ENCODE measurements at regions of chr14 and their contacts with region 1.

Region 1: GRCh38 chr14:105203057-105203531 is 22.0 kb upstream of the NUDT14 start:
- DNase-seq: peak; percentile 90
- ATAC-seq: peak; percentile 45

Region 2: DNA sequence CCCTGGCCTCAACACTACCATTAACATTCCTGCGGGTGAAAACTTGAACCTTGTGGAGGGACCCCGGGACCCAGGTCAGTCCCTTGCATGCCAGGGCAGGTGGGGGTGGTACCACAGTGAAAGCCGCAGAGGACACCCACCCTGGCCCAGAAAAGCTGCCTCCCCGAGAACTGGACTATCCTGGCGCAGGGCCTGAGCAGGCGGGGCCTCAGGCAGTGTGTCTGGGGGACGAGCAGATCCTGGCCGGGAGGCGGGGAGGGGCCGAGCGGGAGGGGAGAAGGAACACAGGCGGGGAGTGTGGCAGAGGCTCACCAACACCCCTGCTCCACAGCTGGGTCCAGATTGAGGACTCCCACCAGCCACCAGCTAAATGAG is 235.0 kb before region 1 on chr14:
- intact Hi-C with region 1: no loop called
- DNase-seq: peak; percentile 86
- ATAC-seq: peak; percentile 78

Region 3: GRCh38 chr14:105351920-105352851 is 149.1 kb after region 1 on chr14:
- intact Hi-C with region 1: loop called (anchors 5 kb)
- DNase-seq: peak; percentile 81
- ATAC-seq: peak; percentile 91

Measured in left ventricle myocardium superior (tissue), 1 donor.